BJ (cell line): ENCODE measurements at regions of chr2 and their contacts with region 1.

Region 1: DNA sequence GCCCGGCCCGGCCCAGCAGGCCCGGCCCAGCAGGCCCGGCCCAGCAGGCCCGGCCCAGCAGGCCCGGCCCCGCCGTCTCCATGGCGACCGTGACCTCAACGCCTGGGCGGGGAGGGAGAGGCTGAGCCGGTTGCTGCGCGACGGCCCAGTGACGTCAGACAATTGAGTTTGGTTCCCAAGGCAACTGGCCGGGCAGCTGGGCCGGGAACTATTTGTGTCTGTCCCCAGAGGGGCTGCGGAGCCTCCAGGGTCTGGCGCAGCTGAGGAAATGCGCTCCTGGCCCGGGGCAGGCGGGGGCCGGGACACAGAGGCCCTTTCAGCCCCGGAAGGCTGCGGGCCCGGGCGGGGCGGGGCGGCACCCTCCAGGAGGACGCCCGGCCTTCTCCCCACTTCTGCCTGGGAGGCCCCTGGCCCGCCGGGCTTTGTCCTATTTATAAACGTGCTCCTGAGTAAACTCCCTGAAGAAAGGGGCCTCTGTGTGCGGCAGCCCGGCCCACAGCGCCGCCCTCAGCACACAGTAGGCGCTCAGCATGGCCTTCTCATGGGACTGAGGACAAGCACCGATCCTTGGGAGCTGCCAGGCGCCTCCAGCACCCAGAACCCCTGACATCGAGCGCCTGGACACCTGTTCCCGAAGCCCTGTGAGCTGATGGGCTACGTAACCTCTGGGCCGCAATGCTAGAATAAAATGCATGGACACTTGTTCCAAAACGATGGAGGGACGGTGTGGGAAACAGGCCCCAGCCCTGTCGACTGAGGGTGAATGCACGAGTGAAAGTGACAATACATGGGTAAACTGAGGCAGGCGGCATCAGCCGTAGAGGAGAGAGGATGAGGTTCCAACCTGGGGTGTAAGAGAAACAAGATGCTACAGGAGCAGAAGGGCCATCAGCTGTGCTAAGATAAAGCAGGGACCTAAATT is 12.3 kb downstream of the TEX44 start:
- DNase-seq: peak; percentile 88
- H3K4me3 ChIP-seq: peak overlapping the region; percentile 54
- H3K27me3 ChIP-seq: no peaks in the 10 kb centered on the region
- CTCF ChIP-seq: no peak

Region 2: GRCh38 chr2:231494669-231495068 is 110.3 kb before region 1 on chr2:
- CTCF ChIA-PET with region 1: no interaction called
- POLR2A ChIA-PET with region 1: no interaction called
- DNase-seq: no peak
- H3K4me3 ChIP-seq: no peak overlapping the region
- H3K27me3 ChIP-seq: no peaks in the 10 kb centered on the region
- CTCF ChIP-seq: no peak

Region 3: GRCh38 chr2:231514103-231514950 is 90.6 kb before region 1 on chr2:
- CTCF ChIA-PET with region 1: interaction called, 13 read pairs
- POLR2A ChIA-PET with region 1: no interaction called
- DNase-seq: peak; percentile 74
- H3K4me3 ChIP-seq: peak overlapping the region; percentile 53
- H3K27me3 ChIP-seq: peaks cover 2% of the 10 kb centered on the region; the same call in 1 of the 2 replicates
- CTCF ChIP-seq: no peak

Region 4: GRCh38 chr2:231531466-231532217 is 73.3 kb before region 1 on chr2:
- CTCF ChIA-PET with region 1: interaction called, 11 read pairs
- POLR2A ChIA-PET with region 1: no interaction called
- DNase-seq: no peak
- H3K4me3 ChIP-seq: no peak overlapping the region
- H3K27me3 ChIP-seq: peaks cover 9% of the 10 kb centered on the region
- CTCF ChIP-seq: no peak

Region 5: GRCh38 chr2:231563378-231563961 is 41.5 kb before region 1 on chr2:
- CTCF ChIA-PET with region 1: interaction called, 202 read pairs
- POLR2A ChIA-PET with region 1: no interaction called
- DNase-seq: no peak
- H3K4me3 ChIP-seq: no peak overlapping the region
- H3K27me3 ChIP-seq: peaks cover 1% of the 10 kb centered on the region
- CTCF ChIP-seq: peak; percentile 85

Region 6: DNA sequence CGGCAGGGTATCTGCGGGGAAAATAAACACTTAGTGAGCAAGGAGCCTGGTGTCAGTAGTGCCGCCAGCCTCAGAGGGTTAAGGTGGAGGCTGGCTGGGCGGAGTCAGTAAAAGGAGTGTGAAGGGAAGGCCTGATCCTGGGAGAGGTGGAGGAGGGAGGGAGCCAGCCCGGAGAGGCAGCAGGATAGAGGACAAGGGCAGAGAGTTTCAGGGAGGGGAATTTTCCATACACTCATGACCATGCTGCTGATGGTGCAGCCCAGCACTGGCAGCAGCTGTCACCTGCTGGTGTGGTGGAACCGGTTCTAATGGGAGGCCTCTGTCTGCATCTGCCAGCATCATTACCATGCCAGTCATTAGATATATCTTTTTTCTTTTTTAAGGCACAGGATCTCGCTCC is 14.3 kb before region 1 on chr2:
- CTCF ChIA-PET with region 1: interaction called, 48 read pairs
- POLR2A ChIA-PET with region 1: no interaction called
- DNase-seq: no peak
- H3K4me3 ChIP-seq: no peak overlapping the region
- H3K27me3 ChIP-seq: no peaks in the 10 kb centered on the region
- CTCF ChIP-seq: no peak

Region 7: DNA sequence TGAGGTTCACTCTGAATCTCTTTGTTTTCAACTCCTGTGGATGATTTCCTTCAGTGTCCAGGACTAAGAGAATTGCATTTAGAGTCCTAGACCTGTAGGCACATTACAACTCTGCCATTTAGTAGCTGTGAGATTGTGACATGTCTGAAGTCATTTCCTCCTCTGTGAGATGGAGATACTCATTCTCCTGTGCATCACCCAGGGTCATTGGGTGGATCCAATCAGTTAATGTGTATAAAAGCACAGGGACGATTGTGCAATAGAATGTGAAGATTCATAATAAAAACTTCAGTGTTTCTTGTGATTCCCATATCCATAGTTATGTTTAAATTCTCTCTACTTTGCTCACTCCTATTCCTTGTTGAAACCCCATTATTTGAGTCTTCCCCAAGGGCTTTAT is 470.1 kb after region 1 on chr2:
- CTCF ChIA-PET with region 1: no interaction called
- POLR2A ChIA-PET with region 1: no interaction called
- DNase-seq: peak; percentile 2
- H3K4me3 ChIP-seq: no peak overlapping the region
- H3K27me3 ChIP-seq: no peaks in the 10 kb centered on the region
- CTCF ChIP-seq: no peak

Region 8: GRCh38 chr2:232142049-232142448 is 537.1 kb after region 1 on chr2:
- CTCF ChIA-PET with region 1: no interaction called
- POLR2A ChIA-PET with region 1: no interaction called
- DNase-seq: no peak
- H3K4me3 ChIP-seq: no peak overlapping the region
- H3K27me3 ChIP-seq: no peaks in the 10 kb centered on the region
- CTCF ChIP-seq: peak; percentile 70